ENCODE measurements at regions of chr3 and their contacts with region 1.

Region 1: GRCh38 chr3:16884084-16884747 is 539 bp upstream of the PLCL2 start:
- DNase-seq: peak; percentile 58 to 71 (median 62)
- H3K4me3 ChIP-seq: peak overlapping the region in 1 of 2 donors; percentile 51
- H3K4me3 Mint-ChIP-seq: peak overlapping the region; percentile 92 to 98 (median 96)
- H3K27ac ChIP-seq: peak overlapping the region; percentile 87
- H3K27ac Mint-ChIP-seq: peak overlapping the region; percentile 95 to 97 (median 96)
- H3K4me1 ChIP-seq: peaks cover 32% of the 10 kb centered on the region
- H3K4me1 Mint-ChIP-seq: peaks cover 23 to 45% (median 30%) of the 10 kb centered on the region in 4 donors
- H3K27me3 ChIP-seq: no peaks in the 10 kb centered on the region
- H3K27me3 Mint-ChIP-seq: no peaks in the 10 kb centered on the region

Region 2: DNA sequence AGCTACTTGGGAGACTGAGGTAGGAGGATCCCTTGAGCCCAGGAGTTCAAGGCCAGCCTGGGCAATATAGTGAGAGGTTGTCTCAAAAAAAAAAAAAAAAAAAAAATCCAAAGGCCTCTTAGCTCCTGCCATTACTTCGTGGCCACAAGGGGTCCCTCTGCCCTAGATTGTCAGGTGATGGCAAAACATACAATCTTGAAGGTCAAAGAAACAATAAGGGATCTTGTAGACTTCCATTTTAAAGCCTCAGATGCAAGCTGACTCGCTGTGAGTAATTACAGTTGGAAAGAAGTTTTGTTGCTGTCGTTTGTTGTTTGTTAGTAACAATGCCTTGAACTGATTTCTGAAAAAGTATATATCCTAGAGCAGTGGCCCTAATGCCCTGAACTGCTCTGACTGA is 55.4 kb before region 1 on chr3:
- CTCF ChIA-PET with region 1: interaction called, 17 read pairs
- POLR2A ChIA-PET with region 1: interaction called, 7 read pairs
- intact Hi-C with region 1: no loop called
- DNase-seq: peak; percentile 56 to 71 (median 59)
- H3K4me3 ChIP-seq: no peak overlapping the region
- H3K4me3 Mint-ChIP-seq: no peak overlapping the region
- H3K27ac ChIP-seq: no peak overlapping the region
- H3K27ac Mint-ChIP-seq: peak overlapping the region in 2 of 7 donors; percentile 20 to 32
- H3K4me1 ChIP-seq: peaks cover 14% of the 10 kb centered on the region
- H3K4me1 Mint-ChIP-seq: peaks cover 18 to 28% (median 26%) of the 10 kb centered on the region in 4 donors
- H3K27me3 ChIP-seq: no peaks in the 10 kb centered on the region
- H3K27me3 Mint-ChIP-seq: no peaks in the 10 kb centered on the region

Region 3: DNA sequence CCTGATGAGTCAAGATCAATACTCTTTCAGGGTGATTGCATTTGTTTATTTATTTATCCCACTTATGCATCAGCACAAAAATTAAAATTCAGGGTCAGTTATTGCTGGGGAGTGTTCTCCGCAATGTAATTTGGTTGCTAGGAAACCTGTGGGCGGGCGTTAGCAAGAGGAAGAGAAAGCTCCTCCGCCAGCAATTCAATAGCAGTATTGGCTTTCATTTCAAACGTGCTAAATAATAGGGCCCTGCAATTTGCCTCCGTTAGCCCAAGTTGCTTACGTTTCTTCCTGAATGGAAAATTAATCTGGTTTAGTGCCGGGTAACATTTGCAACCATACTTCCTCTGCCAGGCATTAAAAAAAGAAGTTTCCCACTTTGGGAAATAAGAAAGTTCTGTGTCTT is 35.0 kb before region 1 on chr3:
- CTCF ChIA-PET with region 1: interaction called, 9 read pairs
- POLR2A ChIA-PET with region 1: interaction called, 180 read pairs
- intact Hi-C with region 1: no loop called
- DNase-seq: peak; percentile 71 to 84 (median 77)
- H3K4me3 ChIP-seq: peak overlapping the region; percentile 8 to 16
- H3K4me3 Mint-ChIP-seq: peak overlapping the region; percentile 51 to 86 (median 78)
- H3K27ac ChIP-seq: peak overlapping the region; percentile 44
- H3K27ac Mint-ChIP-seq: peak overlapping the region; percentile 81 to 97 (median 90)
- H3K4me1 ChIP-seq: peaks cover 56% of the 10 kb centered on the region
- H3K4me1 Mint-ChIP-seq: peaks cover 40 to 61% (median 56%) of the 10 kb centered on the region in 4 donors
- H3K27me3 ChIP-seq: no peaks in the 10 kb centered on the region
- H3K27me3 Mint-ChIP-seq: no peaks in the 10 kb centered on the region

Region 4: GRCh38 chr3:16871915-16872842 is 12.0 kb before region 1 on chr3:
- CTCF ChIA-PET with region 1: interaction called, 16 read pairs
- POLR2A ChIA-PET with region 1: interaction called, 10 read pairs
- intact Hi-C with region 1: no loop called
- DNase-seq: no peak
- H3K4me3 ChIP-seq: no peak overlapping the region
- H3K4me3 Mint-ChIP-seq: no peak overlapping the region
- H3K27ac ChIP-seq: no peak overlapping the region
- H3K27ac Mint-ChIP-seq: no peak overlapping the region
- H3K4me1 ChIP-seq: peaks cover 2% of the 10 kb centered on the region
- H3K4me1 Mint-ChIP-seq: peaks cover under 1 to 2% (median 1%) of the 10 kb centered on the region in 4 donors
- H3K27me3 ChIP-seq: no peaks in the 10 kb centered on the region
- H3K27me3 Mint-ChIP-seq: peaks cover 0 to 2% of the 10 kb centered on the region in 2 donors

Region 5: DNA sequence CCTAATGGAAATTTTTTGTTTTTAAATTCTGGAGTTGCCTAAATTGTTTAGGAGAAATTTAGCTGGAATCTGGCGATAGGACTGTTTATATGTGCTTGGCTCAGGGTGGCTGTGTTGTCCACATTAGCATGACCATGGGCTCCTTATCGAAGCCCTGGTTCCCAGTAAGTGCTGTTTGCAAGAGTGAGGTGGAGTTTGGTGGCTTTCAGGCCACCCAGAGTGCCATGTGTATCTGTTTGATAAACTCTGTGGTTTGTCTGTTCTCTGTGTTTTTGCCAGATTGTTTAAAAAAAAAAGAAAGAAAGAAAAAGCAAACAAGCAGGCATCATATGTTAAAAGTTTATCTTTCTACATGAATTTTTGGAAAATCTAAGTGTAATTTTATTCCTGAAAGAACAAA is 52.0 kb after region 1 on chr3:
- CTCF ChIA-PET with region 1: interaction called, 3 read pairs
- POLR2A ChIA-PET with region 1: interaction called, 3 read pairs
- intact Hi-C with region 1: loop called (anchors 5 kb)
- DNase-seq: peak in 4 of 5 donors; percentile 29 to 42 (median 32)
- H3K4me3 ChIP-seq: no peak overlapping the region
- H3K4me3 Mint-ChIP-seq: peak overlapping the region; percentile 16 to 81 (median 80)
- H3K27ac ChIP-seq: no peak overlapping the region
- H3K27ac Mint-ChIP-seq: peak overlapping the region; percentile 24 to 87 (median 79)
- H3K4me1 ChIP-seq: peaks cover 88% of the 10 kb centered on the region
- H3K4me1 Mint-ChIP-seq: peaks cover 72 to 98% (median 83%) of the 10 kb centered on the region in 4 donors
- H3K27me3 ChIP-seq: no peaks in the 10 kb centered on the region
- H3K27me3 Mint-ChIP-seq: no peaks in the 10 kb centered on the region

Region 6: GRCh38 chr3:17032407-17033034 is 148.3 kb after region 1 on chr3:
- CTCF ChIA-PET with region 1: interaction called, 10 read pairs
- POLR2A ChIA-PET with region 1: interaction called, 4 read pairs
- intact Hi-C with region 1: loop called (anchors 2 kb)
- DNase-seq: no peak
- H3K4me3 ChIP-seq: no peak overlapping the region
- H3K4me3 Mint-ChIP-seq: no peak overlapping the region
- H3K27ac ChIP-seq: no peak overlapping the region
- H3K27ac Mint-ChIP-seq: peak overlapping the region in 2 of 7 donors; percentile 5 to 28
- H3K4me1 ChIP-seq: peaks cover 35% of the 10 kb centered on the region
- H3K4me1 Mint-ChIP-seq: peaks cover 46 to 84% (median 68%) of the 10 kb centered on the region in 4 donors
- H3K27me3 ChIP-seq: no peaks in the 10 kb centered on the region
- H3K27me3 Mint-ChIP-seq: no peaks in the 10 kb centered on the region

Region 7: DNA sequence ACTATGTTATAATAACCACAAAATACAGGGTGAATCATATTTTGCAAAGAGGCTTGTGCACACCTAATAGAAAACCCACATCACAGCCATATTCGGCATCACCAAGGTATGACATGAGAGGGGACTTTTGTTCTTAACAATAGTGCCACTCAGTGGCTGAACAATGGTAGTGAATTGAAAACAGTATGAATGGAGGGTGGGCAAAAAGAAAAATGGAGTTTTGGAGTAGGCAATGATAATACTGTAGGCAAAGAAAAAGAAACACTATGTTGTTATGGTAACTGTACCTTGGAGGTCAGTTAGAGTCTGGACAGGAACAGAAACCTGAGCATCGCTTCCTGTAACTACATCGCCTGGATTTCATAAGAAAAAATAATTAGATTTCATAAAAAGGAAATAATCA is 349.2 kb after region 1 on chr3:
- CTCF ChIA-PET with region 1: interaction called, 9 read pairs
- POLR2A ChIA-PET with region 1: interaction called, 4 read pairs
- intact Hi-C with region 1: loop called (anchors 1 kb)
- DNase-seq: peak; percentile 56 to 69 (median 66)
- H3K4me3 ChIP-seq: no peak overlapping the region
- H3K4me3 Mint-ChIP-seq: peak overlapping the region in 2 of 8 donors; percentile 0
- H3K27ac ChIP-seq: no peak overlapping the region
- H3K27ac Mint-ChIP-seq: peak overlapping the region in 4 of 7 donors; percentile 1 to 84 (median 36)
- H3K4me1 ChIP-seq: peaks cover 18% of the 10 kb centered on the region
- H3K4me1 Mint-ChIP-seq: peaks cover 17 to 28% (median 25%) of the 10 kb centered on the region in 4 donors
- H3K27me3 ChIP-seq: no peaks in the 10 kb centered on the region
- H3K27me3 Mint-ChIP-seq: no peaks in the 10 kb centered on the region